B cell (primary cell): ENCODE measurements at regions of chr7 and their contacts with region 1.

Region 1: DNA sequence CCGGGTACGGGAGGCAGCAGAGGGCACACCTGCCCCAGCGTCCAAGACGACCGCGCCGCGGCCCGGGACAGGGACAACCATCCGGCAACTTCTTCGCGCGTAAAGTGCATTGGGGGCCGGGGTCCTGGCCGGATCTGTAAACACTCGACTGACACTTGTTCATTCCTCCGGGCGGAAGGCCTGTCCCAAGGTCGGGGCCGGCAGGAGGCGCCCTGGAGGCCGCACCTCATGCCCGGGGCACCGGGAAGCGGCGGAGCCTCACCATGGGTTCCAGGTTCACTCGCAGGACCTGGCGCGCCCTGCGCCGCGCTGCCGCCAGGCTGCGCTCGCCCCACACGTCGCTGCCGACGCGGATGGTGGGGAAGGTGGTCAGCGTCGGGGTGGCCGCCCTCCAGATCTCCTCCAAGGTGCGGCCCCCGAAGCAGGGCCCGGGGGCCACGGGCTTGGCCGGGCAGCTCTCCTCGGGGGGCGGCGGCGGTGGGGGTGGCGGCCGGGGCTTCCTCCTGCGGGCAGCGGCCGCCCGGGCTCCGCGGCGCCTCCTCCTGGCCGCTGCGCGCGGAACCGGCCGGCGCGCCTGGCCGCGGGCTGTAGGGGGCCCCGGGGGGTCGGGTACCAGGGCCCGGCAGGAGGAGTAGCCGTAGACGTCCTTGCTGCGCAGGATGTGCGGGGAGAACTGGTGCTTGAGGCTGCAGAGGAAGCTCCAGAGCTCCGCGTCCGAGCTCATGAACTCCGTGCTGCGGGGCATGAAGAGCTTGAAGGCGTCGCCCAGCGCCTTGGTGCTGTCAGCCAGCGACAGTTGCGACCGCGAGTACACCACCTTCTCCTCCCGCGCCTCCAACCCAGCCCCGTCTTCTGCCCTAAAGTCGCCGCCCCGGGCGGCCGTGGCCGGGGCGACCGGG is 746 bp downstream of the CCDC71L start:
- DNase-seq: peak; percentile 91
- ATAC-seq: peak; percentile 47
- H3K4me3 ChIP-seq: peak overlapping the region; percentile 63 to 89 (median 79)
- H3K4me3 Mint-ChIP-seq: peak overlapping the region; percentile 87
- H3K27ac ChIP-seq: peak overlapping the region; percentile 75 to 80
- H3K27ac Mint-ChIP-seq: peak overlapping the region; percentile 91
- H3K4me1 ChIP-seq: peaks cover 23 to 24% of the 10 kb centered on the region in 2 donors
- H3K4me1 Mint-ChIP-seq: peaks cover 34% of the 10 kb centered on the region
- H3K27me3 ChIP-seq: no peaks in the 10 kb centered on the region
- H3K27me3 Mint-ChIP-seq: no peaks in the 10 kb centered on the region
- CTCF ChIP-seq: peak; percentile 81

Region 2: GRCh38 chr7:106064771-106065585 is 595.2 kb before region 1 on chr7:
- CTCF ChIA-PET with region 1: interaction called, 3 read pairs
- POLR2A ChIA-PET with region 1: no interaction called
- intact Hi-C with region 1: loop called (anchors 10 kb)
- DNase-seq: no peak
- ATAC-seq: no peak
- H3K4me3 ChIP-seq: no peak overlapping the region
- H3K4me3 Mint-ChIP-seq: peak overlapping the region; percentile 16
- H3K27ac ChIP-seq: no peak overlapping the region
- H3K27ac Mint-ChIP-seq: peak overlapping the region; percentile 93
- H3K4me1 ChIP-seq: peaks cover 92 to 100% of the 10 kb centered on the region in 2 donors
- H3K4me1 Mint-ChIP-seq: peaks cover 94% of the 10 kb centered on the region
- H3K27me3 ChIP-seq: no peaks in the 10 kb centered on the region
- H3K27me3 Mint-ChIP-seq: no peaks in the 10 kb centered on the region
- CTCF ChIP-seq: no peak

Region 3: GRCh38 chr7:106542550-106543220 is 117.5 kb before region 1 on chr7:
- CTCF ChIA-PET with region 1: interaction called, 50 read pairs
- POLR2A ChIA-PET with region 1: no interaction called
- intact Hi-C with region 1: loop called (anchors 1 kb)
- DNase-seq: peak; percentile 71
- ATAC-seq: peak; percentile 84
- H3K4me3 ChIP-seq: no peak overlapping the region
- H3K4me3 Mint-ChIP-seq: no peak overlapping the region
- H3K27ac ChIP-seq: no peak overlapping the region
- H3K27ac Mint-ChIP-seq: no peak overlapping the region
- H3K4me1 ChIP-seq: peaks cover 0 to 3% of the 10 kb centered on the region in 2 donors
- H3K4me1 Mint-ChIP-seq: peaks cover 4% of the 10 kb centered on the region
- H3K27me3 ChIP-seq: no peaks in the 10 kb centered on the region
- H3K27me3 Mint-ChIP-seq: peaks cover 3% of the 10 kb centered on the region
- CTCF ChIP-seq: peak; percentile 78

Region 4: DNA sequence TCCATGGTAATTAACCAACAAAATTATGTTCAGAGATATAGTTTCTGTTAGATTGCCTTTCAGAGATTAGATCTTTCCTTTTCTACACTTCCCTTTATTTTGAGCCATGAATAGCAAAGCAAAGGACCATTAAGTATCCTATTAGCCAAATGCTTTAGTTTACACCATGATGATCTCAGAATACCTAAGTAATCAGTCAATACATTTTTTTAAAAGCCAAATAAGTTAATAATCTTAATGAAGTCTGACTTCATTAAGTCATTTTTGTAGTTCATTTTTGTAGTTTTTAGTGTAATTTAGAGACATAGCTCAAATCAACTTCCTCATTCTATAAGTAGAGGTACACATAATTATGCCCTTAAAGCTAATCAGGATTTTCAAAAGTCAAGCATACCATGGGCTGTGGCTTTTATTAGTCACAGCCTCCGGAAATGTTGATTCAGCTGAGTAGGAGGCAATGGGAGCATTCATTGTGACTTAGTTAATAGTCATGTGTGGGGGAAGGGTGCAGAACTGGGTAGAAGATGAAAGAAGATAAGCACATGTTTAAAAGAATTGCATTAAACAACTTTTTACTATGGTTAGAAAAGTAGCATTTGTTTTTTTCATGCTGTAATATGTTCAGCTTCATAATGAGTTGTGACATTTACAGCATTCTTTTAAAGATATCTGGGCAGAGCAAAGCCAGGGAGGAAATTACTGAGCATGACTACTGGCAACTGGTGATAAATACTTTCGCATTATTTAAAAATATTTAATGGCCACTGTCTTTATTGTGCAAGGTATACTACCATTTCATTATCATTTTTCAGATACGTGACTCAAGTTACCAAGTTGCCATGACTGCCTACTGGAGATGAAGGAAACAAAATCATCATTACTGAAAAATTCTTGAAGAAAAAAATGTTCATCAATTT is 58.0 kb after region 1 on chr7:
- CTCF ChIA-PET with region 1: interaction called, 29 read pairs
- POLR2A ChIA-PET with region 1: interaction called, 3 read pairs
- intact Hi-C with region 1: loop called (anchors 1 kb)
- DNase-seq: peak; percentile 73
- ATAC-seq: peak; percentile 91
- H3K4me3 ChIP-seq: peak overlapping the region in 1 of 5 experiments; percentile 37
- H3K4me3 Mint-ChIP-seq: no peak overlapping the region
- H3K27ac ChIP-seq: peak overlapping the region; percentile 20 to 43
- H3K27ac Mint-ChIP-seq: no peak overlapping the region
- H3K4me1 ChIP-seq: peaks cover 65 to 76% of the 10 kb centered on the region in 2 donors
- H3K4me1 Mint-ChIP-seq: peaks cover 47% of the 10 kb centered on the region
- H3K27me3 ChIP-seq: no peaks in the 10 kb centered on the region
- H3K27me3 Mint-ChIP-seq: no peaks in the 10 kb centered on the region
- CTCF ChIP-seq: no peak

Region 5: GRCh38 chr7:106793015-106793975 is 133.1 kb after region 1 on chr7:
- CTCF ChIA-PET with region 1: interaction called, 5 read pairs
- POLR2A ChIA-PET with region 1: no interaction called
- intact Hi-C with region 1: loop called (anchors 2 kb)
- DNase-seq: peak; percentile 72
- ATAC-seq: peak; percentile 58
- H3K4me3 ChIP-seq: no peak overlapping the region
- H3K4me3 Mint-ChIP-seq: no peak overlapping the region
- H3K27ac ChIP-seq: no peak overlapping the region
- H3K27ac Mint-ChIP-seq: no peak overlapping the region
- H3K4me1 ChIP-seq: no peaks in the 10 kb centered on the region
- H3K4me1 Mint-ChIP-seq: no peaks in the 10 kb centered on the region
- H3K27me3 ChIP-seq: no peaks in the 10 kb centered on the region
- H3K27me3 Mint-ChIP-seq: no peaks in the 10 kb centered on the region
- CTCF ChIP-seq: peak; percentile 93

Region 6: GRCh38 chr7:107168233-107169119 is 508.3 kb after region 1 on chr7 and contains the start of gene HBP1:
- CTCF ChIA-PET with region 1: interaction called, 5 read pairs
- POLR2A ChIA-PET with region 1: interaction called, 5 read pairs
- intact Hi-C with region 1: loop called (anchors 2 kb)
- DNase-seq: peak; percentile 99
- ATAC-seq: peak; percentile 80
- H3K4me3 ChIP-seq: peak within 1 kb of the TSS; percentile 88 to 97 (median 95)
- H3K4me3 Mint-ChIP-seq: peak within 1 kb of the TSS; percentile 94
- H3K27ac ChIP-seq: peak within 1 kb of the TSS; percentile 98 to 99
- H3K27ac Mint-ChIP-seq: peak within 1 kb of the TSS; percentile 100
- H3K4me1 ChIP-seq: peaks cover 25 to 37% of the 10 kb centered on the region in 2 donors
- H3K4me1 Mint-ChIP-seq: peaks cover 38% of the 10 kb centered on the region
- H3K27me3 ChIP-seq: no peaks in the 10 kb centered on the region
- H3K27me3 Mint-ChIP-seq: peaks cover 12% of the 10 kb centered on the region
- CTCF ChIP-seq: no peak
- total RNA-seq, gene HBP1: 127 and 137 TPM in 2 replicates

Region 7: DNA sequence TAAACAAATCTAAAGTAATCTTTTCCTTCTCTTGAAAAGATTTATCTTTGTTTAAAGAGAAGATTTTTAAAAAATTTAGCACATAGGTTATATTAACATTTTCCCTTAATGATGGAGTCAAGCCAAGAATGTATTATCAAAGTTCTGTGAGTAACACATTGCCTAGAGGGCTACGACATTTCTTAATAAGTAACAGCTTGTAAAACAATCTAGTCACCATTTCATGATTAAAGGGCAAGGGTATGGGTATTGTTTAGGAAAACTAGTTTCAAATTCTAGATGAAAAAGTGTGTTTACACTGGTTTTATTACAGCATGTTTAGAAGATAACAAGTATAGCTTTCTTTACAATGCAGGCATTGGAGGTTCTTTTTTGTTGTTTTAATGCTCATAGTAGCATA is 1498.6 kb after region 1 on chr7:
- CTCF ChIA-PET with region 1: no interaction called
- POLR2A ChIA-PET with region 1: no interaction called
- intact Hi-C with region 1: no loop called
- DNase-seq: no peak
- ATAC-seq: no peak
- H3K4me3 ChIP-seq: no peak overlapping the region
- H3K4me3 Mint-ChIP-seq: no peak overlapping the region
- H3K27ac ChIP-seq: no peak overlapping the region
- H3K27ac Mint-ChIP-seq: no peak overlapping the region
- H3K4me1 ChIP-seq: no peaks in the 10 kb centered on the region
- H3K4me1 Mint-ChIP-seq: peaks cover 1% of the 10 kb centered on the region
- H3K27me3 ChIP-seq: peaks cover 0 to 12% (median 0%) of the 10 kb centered on the region in 4 experiments
- H3K27me3 Mint-ChIP-seq: peaks cover 30% of the 10 kb centered on the region
- CTCF ChIP-seq: no peak